Prostate gland (tissue), 2 donors: ENCODE measurements at regions of chr11 and their contacts with region 1.

Region 1: DNA sequence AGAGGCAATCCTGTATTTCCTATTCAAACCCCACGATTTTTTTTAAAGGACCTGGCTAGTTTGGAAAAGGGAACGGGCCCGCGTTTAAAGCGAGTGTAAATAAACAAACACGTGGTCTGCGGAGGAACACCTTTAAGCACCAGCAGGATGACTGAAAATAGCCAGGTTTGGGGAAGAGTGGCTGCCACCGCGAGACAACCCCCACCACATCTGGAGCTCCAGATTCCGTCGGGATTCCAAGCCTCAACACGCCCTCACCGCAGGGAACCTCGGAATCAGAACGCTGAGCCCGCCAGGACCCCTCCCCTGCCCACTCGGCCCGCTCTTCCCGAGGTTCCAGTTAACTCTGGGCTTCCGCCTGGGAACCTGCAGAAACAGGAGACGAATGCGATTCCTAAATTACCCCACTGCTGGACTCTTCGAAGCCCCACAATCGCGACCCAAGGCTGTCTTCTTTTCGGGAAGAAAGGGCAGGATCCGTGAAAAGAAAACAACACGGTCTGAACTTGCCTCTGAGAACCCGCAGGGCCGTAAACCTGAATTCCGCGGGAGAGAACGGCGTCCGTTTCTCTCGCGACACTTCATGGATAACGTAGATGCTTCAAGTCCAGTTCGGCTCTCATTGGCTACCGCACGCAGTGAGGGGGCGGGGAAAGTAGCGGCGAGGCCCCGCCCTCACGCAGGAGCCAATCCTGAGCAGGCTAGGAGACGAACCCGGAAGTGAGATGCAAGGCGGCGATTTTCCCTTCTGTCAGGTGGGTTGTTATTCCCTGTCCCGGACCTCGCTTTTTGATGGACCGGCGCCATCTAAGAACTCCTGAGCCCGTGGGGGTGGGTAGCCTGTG is at the starts of genes ANKRD49 and MRE11:
- DNase-seq: peak; percentile 98
- H3K4me3 ChIP-seq: peak within 1 kb of the TSS; percentile 75 to 81
- H3K27ac ChIP-seq: peak within 1 kb of the TSS; percentile 70 to 81
- H3K4me1 ChIP-seq: peaks cover 5% of the 10 kb centered on the region
- H3K27me3 ChIP-seq: no peaks in the 10 kb centered on the region
- CTCF ChIP-seq: peak in 1 of 4 experiments; percentile 3
- POLR2A ChIP-seq: peak; percentile 30
- total RNA-seq, gene ANKRD49: 11.6 to 15.6 TPM
- total RNA-seq, gene MRE11: 12.3 to 14.1 TPM

Region 2: GRCh38 chr11:94183886-94184264 is 309.6 kb before region 1 on chr11:
- intact Hi-C with region 1: loop called (anchors 10 kb)
- DNase-seq: peak; percentile 41
- H3K4me3 ChIP-seq: no peak overlapping the region
- H3K27ac ChIP-seq: no peak overlapping the region
- H3K4me1 ChIP-seq: no peaks in the 10 kb centered on the region
- H3K27me3 ChIP-seq: no peaks in the 10 kb centered on the region
- CTCF ChIP-seq: peak; percentile 16 to 81 (median 60)
- POLR2A ChIP-seq: no peak

Region 3: GRCh38 chr11:94303966-94304958 is 189.2 kb before region 1 on chr11 and contains the start of gene IZUMO1R:
- intact Hi-C with region 1: no loop called
- DNase-seq: no peak
- H3K4me3 ChIP-seq: no peak within 1 kb of the TSS
- H3K27ac ChIP-seq: no peak within 1 kb of the TSS
- H3K4me1 ChIP-seq: no peaks in the 10 kb centered on the region
- H3K27me3 ChIP-seq: no peaks in the 10 kb centered on the region
- CTCF ChIP-seq: no peak
- POLR2A ChIP-seq: no peak
- total RNA-seq, gene IZUMO1R: not detected